Transverse colon (tissue), 4 donors: ENCODE measurements at regions of chr9 and their contacts with region 1.

Region 1: GRCh38 chr9:97710356-97711222 is 13.4 kb upstream of the XPA start:
- DNase-seq: peak; percentile 25
- H3K4me3 ChIP-seq: no peak overlapping the region
- H3K27ac ChIP-seq: no peak overlapping the region
- H3K4me1 ChIP-seq: no peaks in the 10 kb centered on the region
- H3K27me3 ChIP-seq: peaks cover 9% of the 10 kb centered on the region
- CTCF ChIP-seq: peak; percentile 77 to 88 (median 83)
- EP300 ChIP-seq: no peak
- POLR2A ChIP-seq: no peak

Region 2: GRCh38 chr9:97803167-97804058 is 92.8 kb after region 1 on chr9:
- in situ Hi-C with region 1: loop called in 1 of 4 experiments (anchors 25 kb)
- intact Hi-C with region 1: no loop called
- DNase-seq: peak; percentile 77
- H3K4me3 ChIP-seq: peak overlapping the region; percentile 5 to 57 (median 42)
- H3K27ac ChIP-seq: peak overlapping the region in 3 of 4 donors; percentile 23 to 63 (median 57)
- H3K4me1 ChIP-seq: peaks cover 0 to 10% (median 7%) of the 10 kb centered on the region in 4 donors
- H3K27me3 ChIP-seq: peaks cover 60% of the 10 kb centered on the region
- CTCF ChIP-seq: peak in 2 of 5 experiments; percentile 17 to 37
- EP300 ChIP-seq: no peak
- POLR2A ChIP-seq: peak; percentile 26

Region 3: GRCh38 chr9:97895695-97896332 is 185.2 kb after region 1 on chr9:
- in situ Hi-C with region 1: loop called (anchors 5 to 10 kb)
- intact Hi-C with region 1: loop called (anchors 2 kb)
- DNase-seq: no peak
- H3K4me3 ChIP-seq: no peak overlapping the region
- H3K27ac ChIP-seq: no peak overlapping the region
- H3K4me1 ChIP-seq: no peaks in the 10 kb centered on the region
- H3K27me3 ChIP-seq: no peaks in the 10 kb centered on the region
- CTCF ChIP-seq: no peak
- EP300 ChIP-seq: no peak
- POLR2A ChIP-seq: no peak

Region 4: DNA sequence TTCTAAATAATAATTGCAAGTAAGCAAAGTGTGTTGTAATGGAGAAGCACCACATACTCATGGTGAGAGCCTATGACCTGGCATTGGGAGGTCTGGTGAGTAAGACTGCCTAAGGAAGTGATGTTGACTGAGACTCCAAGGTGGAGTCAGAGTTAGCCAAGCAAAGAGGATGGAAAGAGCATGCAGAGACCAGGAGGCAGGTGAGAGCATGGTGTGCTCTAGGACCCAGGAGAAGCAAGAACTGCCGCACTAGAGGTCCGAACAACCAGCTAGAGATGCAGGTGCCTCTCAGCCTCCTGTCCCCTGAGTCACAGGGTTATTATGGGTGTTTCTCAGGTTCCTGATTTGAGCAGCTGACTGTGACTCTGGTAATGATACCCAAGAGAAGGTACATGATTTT is 299.9 kb after region 1 on chr9:
- in situ Hi-C with region 1: no loop called
- intact Hi-C with region 1: no loop called
- DNase-seq: peak; percentile 51
- H3K4me3 ChIP-seq: no peak overlapping the region
- H3K27ac ChIP-seq: peak overlapping the region in 2 of 4 donors; percentile 14 to 19
- H3K4me1 ChIP-seq: peaks cover 0 to 9% (median 2%) of the 10 kb centered on the region in 4 donors
- H3K27me3 ChIP-seq: no peaks in the 10 kb centered on the region
- CTCF ChIP-seq: no peak
- EP300 ChIP-seq: no peak
- POLR2A ChIP-seq: no peak

Region 5: GRCh38 chr9:98255578-98256296 is 545.1 kb after region 1 on chr9 and contains the start of gene TBC1D2:
- in situ Hi-C with region 1: loop called in 1 of 4 experiments (anchors 25 kb)
- intact Hi-C with region 1: loop called (anchors 5 kb)
- DNase-seq: peak; percentile 99
- H3K4me3 ChIP-seq: peak within 1 kb of the TSS; percentile 63 to 98 (median 78)
- H3K27ac ChIP-seq: peak within 1 kb of the TSS; percentile 97 to 99 (median 98)
- H3K4me1 ChIP-seq: peaks cover 8 to 37% (median 13%) of the 10 kb centered on the region in 4 donors
- H3K27me3 ChIP-seq: no peaks in the 10 kb centered on the region
- CTCF ChIP-seq: peak in 3 of 5 experiments; percentile 7 to 28 (median 10)
- EP300 ChIP-seq: no peak
- POLR2A ChIP-seq: peak; percentile 71
- total RNA-seq, gene TBC1D2: 37.7 to 109 (median 55.8) TPM

Region 6: DNA sequence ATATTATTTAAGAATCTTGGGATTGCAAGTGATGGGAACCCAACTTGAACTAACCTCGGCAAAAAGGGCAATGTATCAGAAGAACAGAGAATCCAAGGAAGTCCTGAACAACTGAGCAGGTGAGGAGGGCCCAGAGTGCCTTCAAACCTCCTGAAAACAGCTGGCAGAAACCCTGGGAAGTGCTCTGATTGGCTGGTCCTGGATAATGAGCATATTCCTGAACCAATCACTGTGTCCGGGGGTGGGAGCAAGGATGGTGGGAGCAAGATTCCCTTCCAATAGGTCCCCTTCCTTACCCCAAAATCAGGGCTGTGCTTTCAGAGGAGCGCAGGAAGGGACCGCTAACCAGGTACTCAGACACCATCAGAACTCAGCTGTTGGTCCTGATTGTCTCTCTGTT is 576.8 kb after region 1 on chr9:
- in situ Hi-C with region 1: loop called in 1 of 4 experiments (anchors 25 kb)
- intact Hi-C with region 1: no loop called
- DNase-seq: no peak
- H3K4me3 ChIP-seq: no peak overlapping the region
- H3K27ac ChIP-seq: no peak overlapping the region
- H3K4me1 ChIP-seq: no peaks in the 10 kb centered on the region
- H3K27me3 ChIP-seq: peaks cover 4% of the 10 kb centered on the region
- CTCF ChIP-seq: no peak
- EP300 ChIP-seq: no peak
- POLR2A ChIP-seq: no peak